Activated T-helper 2 cell treated with anti-CD3 and anti-CD28 coated beads, Interferon-gamma antibody, Interleukin-2, Interleukin-4, amounts not matched to agents 10 μg/mL and 5 μg/mL and 100 μg/mL, durations not matched to agents 14 hours and 24 hours and 36 hours (primary cell): ENCODE measurements at regions of chr12 and their contacts with region 1.

Region 1: GRCh38 chr12:24902511-24903328 is 46.2 kb downstream of the BCAT1 start:
- DNase-seq: peak; percentile 28
- H3K4me3 Mint-ChIP-seq: peak overlapping the region; percentile 96
- H3K27ac Mint-ChIP-seq: peak overlapping the region; percentile 93
- H3K4me1 Mint-ChIP-seq: peaks cover 36% of the 10 kb centered on the region
- H3K27me3 Mint-ChIP-seq: peaks cover 6% of the 10 kb centered on the region

Region 2: DNA sequence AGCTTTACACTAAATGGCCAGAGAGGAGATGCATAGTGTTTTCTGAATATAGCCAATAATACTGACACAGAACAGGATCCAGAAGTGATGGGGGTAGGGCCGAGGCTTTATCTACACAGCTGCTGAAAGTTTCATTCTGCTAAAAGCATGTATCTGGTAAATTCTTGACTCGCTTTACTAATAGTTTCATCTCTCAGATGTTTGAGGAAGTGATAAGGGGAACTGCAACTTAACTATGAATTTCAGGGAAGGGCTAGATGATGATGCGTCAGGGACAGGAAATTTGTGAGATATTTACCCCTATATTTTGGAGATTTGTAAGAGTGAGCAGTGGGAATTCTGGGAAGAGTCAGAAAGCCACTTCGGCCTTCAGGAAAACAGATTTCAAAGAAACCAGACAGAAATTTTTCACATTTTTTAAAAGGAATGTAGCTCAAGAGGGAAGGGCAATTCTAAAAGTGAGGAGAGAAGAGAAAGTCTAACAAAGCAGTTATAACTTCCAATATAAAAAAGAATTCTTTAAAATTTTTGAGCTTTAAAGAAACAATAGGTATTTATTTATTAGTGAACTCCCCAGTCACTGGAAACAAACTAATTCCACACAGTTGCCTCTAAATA is 196.9 kb before region 1 on chr12:
- intact Hi-C with region 1: loop called (anchors 5 kb)
- DNase-seq: no peak
- H3K4me3 Mint-ChIP-seq: no peak overlapping the region
- H3K27ac Mint-ChIP-seq: no peak overlapping the region
- H3K4me1 Mint-ChIP-seq: peaks cover 13% of the 10 kb centered on the region
- H3K27me3 Mint-ChIP-seq: no peaks in the 10 kb centered on the region

Region 3: GRCh38 chr12:24919346-24920001 is 16.8 kb after region 1 on chr12:
- intact Hi-C with region 1: loop called (anchors 1 kb)
- DNase-seq: no peak
- H3K4me3 Mint-ChIP-seq: no peak overlapping the region
- H3K27ac Mint-ChIP-seq: no peak overlapping the region
- H3K4me1 Mint-ChIP-seq: peaks cover 28% of the 10 kb centered on the region
- H3K27me3 Mint-ChIP-seq: peaks cover 20% of the 10 kb centered on the region

Region 4: GRCh38 chr12:24948757-24949722 is 46.3 kb after region 1 on chr12 and contains the start of gene BCAT1:
- intact Hi-C with region 1: loop called (anchors 1 kb)
- DNase-seq: peak; percentile 18
- H3K4me3 Mint-ChIP-seq: peak within 1 kb of the TSS; percentile 82
- H3K27ac Mint-ChIP-seq: peak within 1 kb of the TSS; percentile 72
- H3K4me1 Mint-ChIP-seq: peaks cover 42% of the 10 kb centered on the region
- H3K27me3 Mint-ChIP-seq: peaks cover 45% of the 10 kb centered on the region
- total RNA-seq, gene BCAT1: 12.7 and 12.9 TPM in 2 replicates